A673 (cell line): ENCODE measurements at regions of chr20 and their contacts with region 1.

Region 1: DNA sequence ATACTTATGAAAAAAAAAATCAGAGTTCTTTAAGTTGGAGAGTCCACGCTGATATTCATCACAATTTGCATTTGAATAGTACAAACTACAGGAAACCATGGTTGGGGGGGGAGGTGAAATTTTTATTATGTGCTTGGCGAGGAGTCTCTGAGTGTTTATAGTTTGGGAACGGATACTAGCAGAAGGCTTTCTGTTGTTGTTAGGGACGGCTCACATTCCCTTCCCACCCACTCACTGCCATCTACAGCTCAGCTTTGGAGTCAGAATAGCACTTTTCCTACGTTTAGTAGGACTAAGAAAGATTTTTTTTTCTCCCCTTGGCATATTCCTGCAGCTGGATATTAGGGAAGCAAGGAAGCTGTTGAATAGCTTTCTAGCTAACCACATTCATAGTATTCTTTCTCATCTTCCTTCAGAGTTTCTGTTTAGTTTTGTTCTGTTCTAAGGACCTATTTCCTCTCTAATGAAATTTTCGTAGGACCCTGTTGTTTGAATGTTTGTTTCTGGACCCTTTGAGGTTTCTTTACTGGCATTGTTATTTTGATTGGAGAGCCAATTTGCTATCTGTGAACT is 235.1 kb upstream of the ZNF217 start:
- DNase-seq: peak; percentile 98
- H3K4me3 ChIP-seq: peak overlapping the region; percentile 34
- H3K27ac ChIP-seq: peak overlapping the region; percentile 92
- H3K4me1 ChIP-seq: peaks cover 49% of the 10 kb centered on the region
- H3K27me3 ChIP-seq: no peaks in the 10 kb centered on the region
- CTCF ChIP-seq: peak; percentile 47

Region 2: GRCh38 chr20:53578492-53579222 is 250.1 kb before region 1 on chr20:
- CTCF ChIA-PET with region 1: no interaction called
- POLR2A ChIA-PET with region 1: no interaction called
- intact Hi-C with region 1: loop called (anchors 2 kb)
- DNase-seq: peak; percentile 94
- H3K4me3 ChIP-seq: peak overlapping the region; percentile 16
- H3K27ac ChIP-seq: peak overlapping the region; percentile 79
- H3K4me1 ChIP-seq: peaks cover 50% of the 10 kb centered on the region
- H3K27me3 ChIP-seq: no peaks in the 10 kb centered on the region
- CTCF ChIP-seq: peak; percentile 85

Region 3: GRCh38 chr20:53677447-53678314 is 151.1 kb before region 1 on chr20:
- CTCF ChIA-PET with region 1: no interaction called
- POLR2A ChIA-PET with region 1: no interaction called
- intact Hi-C with region 1: loop called (anchors 5 kb)
- DNase-seq: peak; percentile 92
- H3K4me3 ChIP-seq: peak overlapping the region; percentile 24
- H3K27ac ChIP-seq: peak overlapping the region; percentile 60
- H3K4me1 ChIP-seq: peaks cover 35% of the 10 kb centered on the region
- H3K27me3 ChIP-seq: no peaks in the 10 kb centered on the region
- CTCF ChIP-seq: no peak

Region 4: DNA sequence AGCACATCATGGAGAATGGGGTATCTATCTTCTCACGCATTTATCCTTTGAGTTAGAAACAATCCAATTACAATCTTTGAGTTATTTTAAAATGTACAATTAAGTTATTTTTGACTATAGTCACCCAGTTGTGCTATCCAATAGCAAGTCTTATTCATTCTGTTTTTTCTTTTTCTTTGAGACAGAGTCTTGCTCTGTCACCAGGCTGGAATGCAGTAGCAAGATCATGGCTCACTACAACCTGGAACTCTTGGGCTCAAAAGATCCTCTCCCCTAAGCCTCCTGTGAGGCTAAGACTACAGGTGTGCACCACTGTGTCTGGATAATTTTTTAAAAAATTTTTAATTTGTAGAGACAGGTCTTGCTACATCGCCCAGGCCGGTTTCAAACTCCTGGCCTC is 33.6 kb before region 1 on chr20:
- CTCF ChIA-PET with region 1: no interaction called
- POLR2A ChIA-PET with region 1: interaction called, 10 read pairs
- intact Hi-C with region 1: no loop called
- DNase-seq: no peak
- H3K4me3 ChIP-seq: no peak overlapping the region
- H3K27ac ChIP-seq: no peak overlapping the region
- H3K4me1 ChIP-seq: peaks cover 5% of the 10 kb centered on the region
- H3K27me3 ChIP-seq: no peaks in the 10 kb centered on the region
- CTCF ChIP-seq: no peak

Region 5: GRCh38 chr20:53915446-53916172 is 86.8 kb after region 1 on chr20:
- CTCF ChIA-PET with region 1: interaction called, 11 read pairs
- POLR2A ChIA-PET with region 1: no interaction called
- intact Hi-C with region 1: loop called (anchors 2 kb)
- DNase-seq: peak; percentile 94
- H3K4me3 ChIP-seq: peak overlapping the region; percentile 54
- H3K27ac ChIP-seq: peak overlapping the region; percentile 98
- H3K4me1 ChIP-seq: peaks cover 53% of the 10 kb centered on the region
- H3K27me3 ChIP-seq: no peaks in the 10 kb centered on the region
- CTCF ChIP-seq: peak; percentile 97